ENCODE measurements at regions of chr11 and their contacts with region 1.

Region 1: DNA sequence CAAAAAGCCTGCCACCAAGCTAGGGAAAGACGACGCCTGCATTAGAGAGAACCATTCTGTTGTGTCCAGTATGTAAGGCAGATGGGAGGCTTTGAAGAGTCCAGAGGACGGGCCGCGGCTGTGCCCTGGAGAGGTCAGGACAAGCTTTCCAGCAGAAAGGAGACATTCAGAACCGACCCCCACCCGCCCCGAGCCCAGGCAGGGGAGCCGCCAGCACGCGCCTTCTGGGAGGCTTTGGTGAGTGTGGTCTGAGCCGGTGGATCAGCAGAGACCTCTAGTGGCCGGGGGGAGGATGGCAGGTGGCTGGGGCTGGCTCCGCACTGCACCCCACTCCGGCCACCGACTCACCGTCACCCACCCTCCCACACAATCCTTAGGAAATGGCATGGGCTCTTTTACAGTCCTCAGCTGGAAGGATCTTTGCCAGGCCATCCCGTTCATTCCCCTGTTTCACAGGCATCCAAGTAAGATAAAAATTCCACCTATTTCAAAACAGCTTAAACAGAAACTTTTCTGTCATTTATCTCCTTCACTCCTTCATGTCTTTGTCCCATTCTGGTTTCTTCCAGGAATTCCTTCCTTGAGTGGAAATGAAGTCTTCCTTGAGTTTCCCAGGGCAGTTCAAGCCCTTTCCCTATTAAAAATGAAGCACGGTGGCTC is 91.2 kb downstream of the FEZ1 start:
- DNase-seq: peak; percentile 56 to 84 (median 70)
- H3K4me3 ChIP-seq: no peak overlapping the region
- H3K27ac ChIP-seq: no peak overlapping the region
- H3K4me1 ChIP-seq: peaks cover 0 to 7% of the 10 kb centered on the region in 2 donors
- H3K27me3 ChIP-seq: peaks cover 5% of the 10 kb centered on the region
- CTCF ChIP-seq: peak; percentile 70 to 97 (median 89)
- POLR2A ChIP-seq: no peak

Region 2: DNA sequence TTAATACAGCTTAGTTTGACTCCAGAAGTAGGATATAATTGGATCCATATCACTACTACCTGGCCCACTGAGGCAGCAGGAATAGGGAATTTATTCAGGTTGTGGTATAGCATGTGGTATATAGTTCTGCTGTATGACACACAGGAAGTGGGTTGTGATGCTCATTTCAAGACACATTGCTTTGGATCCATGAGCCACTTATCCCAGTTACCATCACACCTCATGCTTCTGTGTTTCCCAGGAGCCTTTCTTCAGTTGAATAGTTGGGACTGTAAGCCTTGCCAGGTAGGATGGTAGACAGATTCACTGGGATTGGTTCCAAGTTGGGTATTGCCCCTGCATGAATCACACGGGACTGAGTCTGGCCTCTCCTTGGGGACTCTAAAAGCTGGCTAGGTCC is 351.7 kb before region 1 on chr11:
- intact Hi-C with region 1: no loop called
- DNase-seq: no peak
- H3K4me3 ChIP-seq: no peak overlapping the region
- H3K27ac ChIP-seq: no peak overlapping the region
- H3K4me1 ChIP-seq: no peaks in the 10 kb centered on the region
- H3K27me3 ChIP-seq: no peaks in the 10 kb centered on the region
- CTCF ChIP-seq: no peak
- POLR2A ChIP-seq: no peak

Region 3: DNA sequence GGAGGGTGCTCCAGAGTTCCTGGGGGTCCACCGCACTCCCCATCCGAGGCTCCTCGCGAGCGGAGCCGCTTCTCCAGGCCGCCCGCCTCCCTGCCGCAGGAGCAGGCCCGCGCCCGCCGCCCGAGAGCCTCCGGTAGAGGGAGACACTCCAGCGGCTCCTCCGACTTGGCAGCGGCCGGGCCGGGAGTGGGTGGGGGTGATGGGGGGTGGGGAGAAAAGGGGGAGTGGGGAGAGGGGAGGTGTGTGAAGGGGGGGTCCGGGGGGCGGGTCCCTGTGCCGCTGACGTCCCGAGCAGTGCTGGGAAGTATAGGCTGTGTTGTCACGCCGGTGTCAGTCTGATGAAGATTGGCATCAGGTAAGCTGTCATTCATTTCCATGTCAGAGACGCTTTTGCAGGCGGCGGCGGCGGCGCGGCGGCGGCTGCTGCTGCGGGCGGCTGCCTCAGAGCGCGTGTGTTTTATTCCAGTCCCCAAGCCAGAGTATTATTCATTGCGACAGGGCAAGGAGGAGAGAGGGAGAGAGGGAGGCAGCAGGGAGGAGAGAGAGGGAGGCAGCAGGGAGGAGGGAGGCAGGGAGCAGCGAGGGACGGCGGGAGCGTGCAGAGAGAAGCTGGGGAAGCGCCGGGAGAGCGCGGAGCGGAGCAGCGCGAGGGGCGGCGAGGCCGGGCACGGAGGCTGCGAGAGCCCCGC is 240.3 kb before region 1 on chr11 and contains the start of gene PKNOX2:
- intact Hi-C with region 1: loop called in 1 of 2 experiments (anchors 5 kb)
- DNase-seq: peak; percentile 65 to 78 (median 73)
- H3K4me3 ChIP-seq: peak within 1 kb of the TSS in 2 of 4 donors; percentile 44 to 73
- H3K27ac ChIP-seq: peak within 1 kb of the TSS in 3 of 5 donors; percentile 10 to 82 (median 72)
- H3K4me1 ChIP-seq: peaks cover 0 to 16% of the 10 kb centered on the region in 2 donors
- H3K27me3 ChIP-seq: no peaks in the 10 kb centered on the region
- CTCF ChIP-seq: peak; percentile 16 to 49 (median 39)
- POLR2A ChIP-seq: peak in 1 of 2 donors; percentile 21
- total RNA-seq, gene PKNOX2: 1.2 to 34.7 (median 10.7) TPM